ENCODE measurements at regions of chr6 and their contacts with region 1.

Region 1: GRCh38 chr6:45421709-45422502 is 44.2 kb upstream of the SUPT3H start:
- DNase-seq: peak; percentile 54
- H3K4me3 Mint-ChIP-seq: peak overlapping the region; percentile 91
- H3K27ac Mint-ChIP-seq: peak overlapping the region; percentile 35
- H3K4me1 Mint-ChIP-seq: peaks cover 17% of the 10 kb centered on the region
- H3K27me3 Mint-ChIP-seq: no peaks in the 10 kb centered on the region
- CTCF ChIP-seq: no peak

Region 2: GRCh38 chr6:44630125-44631028 is 791.5 kb before region 1 on chr6:
- CTCF ChIA-PET with region 1: interaction called, 7 read pairs
- POLR2A ChIA-PET with region 1: no interaction called
- intact Hi-C with region 1: loop called (anchors 1 kb)
- DNase-seq: peak; percentile 55
- H3K4me3 Mint-ChIP-seq: no peak overlapping the region
- H3K27ac Mint-ChIP-seq: no peak overlapping the region
- H3K4me1 Mint-ChIP-seq: no peaks in the 10 kb centered on the region
- H3K27me3 Mint-ChIP-seq: peaks cover 14% of the 10 kb centered on the region
- CTCF ChIP-seq: peak; percentile 67

Region 3: DNA sequence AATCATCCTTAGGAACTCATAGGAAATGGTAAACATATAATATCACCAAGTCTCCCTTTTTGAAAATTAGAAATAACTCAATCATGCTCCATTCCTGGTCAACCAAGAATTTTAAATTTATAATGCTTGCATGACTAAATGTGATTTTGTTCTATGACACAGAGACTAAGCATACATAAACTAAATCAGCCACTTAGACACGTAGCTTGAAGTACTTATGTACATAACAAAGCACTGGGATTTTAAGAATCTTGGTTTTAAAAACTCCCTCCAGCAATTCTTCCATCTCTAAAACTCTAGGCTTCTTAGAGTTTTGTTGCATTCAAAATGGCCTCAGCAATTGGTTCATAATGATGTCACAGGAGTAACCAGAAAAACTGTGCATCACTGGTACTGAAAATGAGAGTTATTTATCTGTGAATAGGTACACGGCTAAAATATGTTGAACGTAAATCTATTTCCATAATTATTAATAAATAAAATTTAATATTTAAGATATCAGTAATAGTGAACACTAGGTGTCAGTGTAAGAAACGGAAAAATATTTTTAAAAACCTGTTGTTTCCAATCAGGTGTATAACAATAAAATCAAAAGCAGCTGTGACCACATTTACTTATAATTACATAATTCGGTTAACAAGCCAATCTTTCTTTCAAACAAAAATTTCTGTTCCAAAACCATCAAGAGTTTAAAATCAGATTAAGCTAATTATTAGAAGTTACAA is 335.4 kb before region 1 on chr6:
- CTCF ChIA-PET with region 1: no interaction called
- POLR2A ChIA-PET with region 1: no interaction called
- intact Hi-C with region 1: loop called (anchors 2 kb)
- DNase-seq: no peak
- H3K4me3 Mint-ChIP-seq: no peak overlapping the region
- H3K27ac Mint-ChIP-seq: no peak overlapping the region
- H3K4me1 Mint-ChIP-seq: peaks cover 7% of the 10 kb centered on the region
- H3K27me3 Mint-ChIP-seq: no peaks in the 10 kb centered on the region
- CTCF ChIP-seq: peak; percentile 17

Region 4: GRCh38 chr6:45445749-45446549 is 24.0 kb after region 1 on chr6:
- CTCF ChIA-PET with region 1: interaction called, 4 read pairs
- POLR2A ChIA-PET with region 1: interaction called, 12 read pairs
- intact Hi-C with region 1: loop called (anchors 2 kb)
- DNase-seq: peak; percentile 99
- H3K4me3 Mint-ChIP-seq: peak overlapping the region; percentile 29
- H3K27ac Mint-ChIP-seq: peak overlapping the region; percentile 85
- H3K4me1 Mint-ChIP-seq: peaks cover 34% of the 10 kb centered on the region
- H3K27me3 Mint-ChIP-seq: no peaks in the 10 kb centered on the region
- CTCF ChIP-seq: no peak

Region 5: DNA sequence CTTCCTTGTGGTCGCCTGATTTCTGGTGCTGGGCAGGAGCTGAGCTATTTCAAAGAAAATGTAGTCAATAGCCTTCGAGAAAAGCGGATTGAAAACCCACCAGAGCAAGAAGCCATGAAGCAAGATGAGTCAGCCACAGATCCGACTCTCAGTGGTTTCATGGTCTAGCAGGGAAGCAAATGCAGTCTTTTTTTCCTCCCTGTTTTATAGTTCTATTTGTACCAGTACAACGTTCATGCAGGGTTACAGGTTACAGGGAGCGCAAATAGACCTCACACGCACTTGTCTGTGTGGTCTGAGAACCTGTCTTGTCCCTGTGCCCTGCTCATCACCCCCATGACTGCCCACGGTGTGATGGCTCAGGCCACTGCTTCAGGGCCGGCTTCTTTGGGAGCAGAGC is 265.7 kb after region 1 on chr6:
- CTCF ChIA-PET with region 1: no interaction called
- POLR2A ChIA-PET with region 1: no interaction called
- intact Hi-C with region 1: no loop called
- DNase-seq: no peak
- H3K4me3 Mint-ChIP-seq: no peak overlapping the region
- H3K27ac Mint-ChIP-seq: no peak overlapping the region
- H3K4me1 Mint-ChIP-seq: peaks cover 10% of the 10 kb centered on the region
- H3K27me3 Mint-ChIP-seq: no peaks in the 10 kb centered on the region
- CTCF ChIP-seq: no peak

Region 6: GRCh38 chr6:45714741-45715507 is 293.0 kb after region 1 on chr6:
- CTCF ChIA-PET with region 1: interaction called, 17 read pairs
- POLR2A ChIA-PET with region 1: interaction called, 13 read pairs
- intact Hi-C with region 1: loop called (anchors 1 kb)
- DNase-seq: peak; percentile 87
- H3K4me3 Mint-ChIP-seq: no peak overlapping the region
- H3K27ac Mint-ChIP-seq: peak overlapping the region; percentile 13
- H3K4me1 Mint-ChIP-seq: peaks cover 11% of the 10 kb centered on the region
- H3K27me3 Mint-ChIP-seq: no peaks in the 10 kb centered on the region
- CTCF ChIP-seq: peak; percentile 87